ENCODE measurements at regions of chr2 and their contacts with region 1.

Region 1: GRCh38 chr2:112530728-112531127 is 11.5 kb upstream of the POLR1B start:
- H3K4me3 ChIP-seq: no peak overlapping the region
- H3K27ac ChIP-seq: no peak overlapping the region
- H3K4me1 ChIP-seq: no peaks in the 10 kb centered on the region
- CTCF ChIP-seq: no peak

Region 2: GRCh38 chr2:112811841-112812306 is 281.1 kb after region 1 on chr2:
- CTCF ChIA-PET with region 1: interaction called, 11 read pairs
- POLR2A ChIA-PET with region 1: no interaction called
- H3K4me3 ChIP-seq: no peak overlapping the region
- H3K27ac ChIP-seq: no peak overlapping the region
- H3K4me1 ChIP-seq: no peaks in the 10 kb centered on the region
- CTCF ChIP-seq: no peak

Measured in HEK293 (cell line).